GM13976 (cell line): ENCODE measurements at regions of chr7 and their contacts with region 1.

Region 1: GRCh38 chr7:92447345-92448204 is at the start of gene GATAD1:
- DNase-seq: peak; percentile 91
- CTCF ChIP-seq: peak; percentile 83

Region 2: DNA sequence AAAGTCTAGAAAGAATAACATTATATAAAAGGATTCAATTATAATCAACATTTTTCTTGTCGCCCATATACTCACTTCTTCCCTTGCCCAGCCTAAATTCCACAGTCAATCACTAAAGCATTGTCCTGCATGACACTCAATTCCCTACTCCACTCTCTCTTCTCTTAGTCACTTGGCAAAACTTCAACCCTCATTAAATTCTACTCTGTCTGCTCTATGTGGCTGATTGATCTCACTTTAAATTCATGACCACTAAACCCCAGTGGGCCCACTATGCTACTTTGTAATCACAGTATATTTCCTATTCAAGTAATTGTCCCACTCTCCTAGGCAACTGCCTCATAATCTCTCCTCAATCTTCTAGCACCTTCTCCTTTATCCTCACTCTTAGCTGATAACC is 621.2 kb before region 1 on chr7:
- in situ Hi-C with region 1: loop called (anchors 10 kb)
- DNase-seq: no peak
- CTCF ChIP-seq: no peak

Region 3: GRCh38 chr7:92661651-92662050 is 214.1 kb after region 1 on chr7:
- in situ Hi-C with region 1: no loop called
- DNase-seq: no peak
- CTCF ChIP-seq: no peak